ENCODE measurements at regions of chr2 and their contacts with region 1.

Region 1: GRCh38 chr2:48075631-48076030 is 169.3 kb upstream of the FBXO11 start:
- DNase-seq: no peak
- H3K4me3 ChIP-seq: no peak overlapping the region
- CTCF ChIP-seq: no peak
- POLR2A ChIP-seq: no peak

Region 2: GRCh38 chr2:48032765-48033164 is 42.9 kb before region 1 on chr2:
- intact Hi-C with region 1: loop called (anchors 1 kb)
- DNase-seq: no peak
- H3K4me3 ChIP-seq: no peak overlapping the region
- CTCF ChIP-seq: no peak
- POLR2A ChIP-seq: no peak

Region 3: DNA sequence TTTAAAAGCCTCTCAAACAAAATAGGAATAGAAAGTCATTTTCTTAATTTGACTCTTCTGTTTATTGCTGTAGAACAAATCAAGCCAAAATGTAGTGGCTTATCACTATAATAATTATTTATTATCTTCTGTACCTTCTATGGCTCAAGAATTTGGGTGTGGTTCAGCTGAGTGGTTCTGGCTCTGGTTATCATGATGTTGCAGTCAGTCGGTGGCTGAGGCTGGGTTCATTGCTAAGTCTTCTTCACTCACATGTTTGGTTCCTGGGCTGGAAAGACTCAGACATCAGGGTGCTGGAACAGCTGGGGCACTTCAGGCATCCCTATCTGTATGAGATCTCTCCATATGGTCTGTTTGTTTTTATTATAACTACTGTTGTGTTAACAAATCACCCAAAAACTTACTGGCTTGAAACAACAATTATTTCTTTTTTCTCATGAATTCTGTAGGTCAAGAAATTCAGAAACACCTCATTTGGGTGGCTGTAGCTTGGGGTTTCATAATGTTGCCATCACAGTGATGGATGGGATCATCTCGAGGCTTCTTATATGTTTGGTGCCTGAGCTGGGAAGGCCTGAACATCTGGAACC is 73.3 kb after region 1 on chr2:
- intact Hi-C with region 1: no loop called
- DNase-seq: no peak
- H3K4me3 ChIP-seq: no peak overlapping the region
- CTCF ChIP-seq: no peak
- POLR2A ChIP-seq: no peak

Region 4: DNA sequence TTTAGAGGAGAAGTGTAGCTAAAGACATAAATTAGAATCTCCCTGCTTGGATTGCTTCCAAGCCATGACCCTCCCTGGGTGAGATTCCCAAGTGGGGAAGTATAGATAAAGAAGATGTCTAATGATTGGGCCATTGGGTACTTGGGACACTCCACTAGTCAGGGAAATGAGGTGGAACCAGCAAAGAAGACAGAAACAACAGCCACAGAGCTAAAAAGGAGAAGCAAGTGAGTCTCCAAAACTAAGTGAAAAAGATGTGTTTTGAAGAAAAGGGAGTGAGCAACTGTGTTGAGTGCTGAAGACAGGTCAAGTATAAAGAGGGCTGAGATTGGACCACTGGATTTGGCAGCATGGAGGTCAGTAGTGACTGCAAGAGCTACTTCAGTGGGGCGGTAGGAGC is 177.7 kb after region 1 on chr2:
- intact Hi-C with region 1: no loop called
- DNase-seq: no peak
- H3K4me3 ChIP-seq: no peak overlapping the region
- CTCF ChIP-seq: no peak
- POLR2A ChIP-seq: no peak

Measured in lower leg skin (tissue), 4 donors.